ENCODE measurements at regions of chr11 and their contacts with region 1.

Region 1: GRCh38 chr11:55793321-55793720 is 2.0 kb upstream of the OR5D14 start:
- DNase-seq: no peak
- H3K4me3 ChIP-seq: no peak overlapping the region
- H3K27ac ChIP-seq: no peak overlapping the region
- H3K27me3 ChIP-seq: no peaks in the 10 kb centered on the region
- CTCF ChIP-seq: no peak

Region 2: GRCh38 chr11:55838452-55838851 is 45.1 kb after region 1 on chr11 and contains the start of gene OR5D16:
- CTCF ChIA-PET with region 1: no interaction called
- POLR2A ChIA-PET with region 1: no interaction called
- DNase-seq: no peak
- H3K4me3 ChIP-seq: no peak within 1 kb of the TSS
- H3K27ac ChIP-seq: no peak within 1 kb of the TSS
- H3K27me3 ChIP-seq: no peaks in the 10 kb centered on the region
- CTCF ChIP-seq: no peak
- polyA plus RNA-seq, gene OR5D16: not detected in 2 replicates

Region 3: GRCh38 chr11:55966391-55966790 is 173.1 kb after region 1 on chr11:
- CTCF ChIA-PET with region 1: interaction called, 15 read pairs
- POLR2A ChIA-PET with region 1: no interaction called
- DNase-seq: no peak
- H3K4me3 ChIP-seq: no peak overlapping the region
- H3K27ac ChIP-seq: no peak overlapping the region
- H3K27me3 ChIP-seq: no peaks in the 10 kb centered on the region
- CTCF ChIP-seq: no peak

Measured in AG04450 (cell line).